CD14-positive monocyte (primary cell): ENCODE measurements at regions of chr12 and their contacts with region 1.

Region 1: GRCh38 chr12:52032804-52033502 is 18.3 kb upstream of the NR4A1 start:
- DNase-seq: peak; percentile 92 to 97 (median 97)
- H3K4me3 ChIP-seq: peak overlapping the region; percentile 15 to 66 (median 31)
- H3K4me3 Mint-ChIP-seq: peak overlapping the region; percentile 70 to 80
- H3K27ac ChIP-seq: peak overlapping the region; percentile 47 to 84
- H3K27ac Mint-ChIP-seq: peak overlapping the region; percentile 87 to 96 (median 95)
- H3K4me1 ChIP-seq: peaks cover 31 to 40% of the 10 kb centered on the region in 2 donors
- H3K4me1 Mint-ChIP-seq: peaks cover 38% of the 10 kb centered on the region
- H3K27me3 ChIP-seq: peaks cover 8 to 28% of the 10 kb centered on the region in 2 donors
- H3K27me3 Mint-ChIP-seq: peaks cover 21 to 36% (median 22%) of the 10 kb centered on the region in 3 donors
- CTCF ChIP-seq: no peak

Region 2: GRCh38 chr12:51994959-51995358 is 38.0 kb before region 1 on chr12:
- intact Hi-C with region 1: loop called in 1 of 2 experiments (anchors 5 kb)
- DNase-seq: no peak
- H3K4me3 ChIP-seq: no peak overlapping the region
- H3K4me3 Mint-ChIP-seq: no peak overlapping the region
- H3K27ac ChIP-seq: no peak overlapping the region
- H3K27ac Mint-ChIP-seq: peak overlapping the region in 1 of 7 donors; percentile 38
- H3K4me1 ChIP-seq: peaks cover 11% of the 10 kb centered on the region in 2 donors
- H3K4me1 Mint-ChIP-seq: peaks cover 17% of the 10 kb centered on the region
- H3K27me3 ChIP-seq: no peaks in the 10 kb centered on the region
- H3K27me3 Mint-ChIP-seq: peaks cover 0 to 5% (median 2%) of the 10 kb centered on the region in 3 donors
- CTCF ChIP-seq: no peak

Region 3: GRCh38 chr12:52050761-52051541 is 18.0 kb after region 1 on chr12 and contains the start of gene NR4A1:
- intact Hi-C with region 1: loop called (anchors 2 kb)
- DNase-seq: peak; percentile 92 to 99 (median 97)
- H3K4me3 ChIP-seq: peak within 1 kb of the TSS; percentile 60 to 87 (median 63)
- H3K4me3 Mint-ChIP-seq: peak within 1 kb of the TSS; percentile 94 to 99
- H3K27ac ChIP-seq: peak within 1 kb of the TSS; percentile 85 to 94
- H3K27ac Mint-ChIP-seq: peak within 1 kb of the TSS; percentile 94 to 97 (median 96)
- H3K4me1 ChIP-seq: peaks cover 36 to 72% of the 10 kb centered on the region in 2 donors
- H3K4me1 Mint-ChIP-seq: peaks cover 43% of the 10 kb centered on the region
- H3K27me3 ChIP-seq: peaks cover 0 to 24% of the 10 kb centered on the region in 2 donors
- H3K27me3 Mint-ChIP-seq: peaks cover 28 to 43% (median 39%) of the 10 kb centered on the region in 3 donors
- CTCF ChIP-seq: no peak
- polyA plus RNA-seq, gene NR4A1: 10.1 to 1,297 (median 41.4) TPM

Region 4: DNA sequence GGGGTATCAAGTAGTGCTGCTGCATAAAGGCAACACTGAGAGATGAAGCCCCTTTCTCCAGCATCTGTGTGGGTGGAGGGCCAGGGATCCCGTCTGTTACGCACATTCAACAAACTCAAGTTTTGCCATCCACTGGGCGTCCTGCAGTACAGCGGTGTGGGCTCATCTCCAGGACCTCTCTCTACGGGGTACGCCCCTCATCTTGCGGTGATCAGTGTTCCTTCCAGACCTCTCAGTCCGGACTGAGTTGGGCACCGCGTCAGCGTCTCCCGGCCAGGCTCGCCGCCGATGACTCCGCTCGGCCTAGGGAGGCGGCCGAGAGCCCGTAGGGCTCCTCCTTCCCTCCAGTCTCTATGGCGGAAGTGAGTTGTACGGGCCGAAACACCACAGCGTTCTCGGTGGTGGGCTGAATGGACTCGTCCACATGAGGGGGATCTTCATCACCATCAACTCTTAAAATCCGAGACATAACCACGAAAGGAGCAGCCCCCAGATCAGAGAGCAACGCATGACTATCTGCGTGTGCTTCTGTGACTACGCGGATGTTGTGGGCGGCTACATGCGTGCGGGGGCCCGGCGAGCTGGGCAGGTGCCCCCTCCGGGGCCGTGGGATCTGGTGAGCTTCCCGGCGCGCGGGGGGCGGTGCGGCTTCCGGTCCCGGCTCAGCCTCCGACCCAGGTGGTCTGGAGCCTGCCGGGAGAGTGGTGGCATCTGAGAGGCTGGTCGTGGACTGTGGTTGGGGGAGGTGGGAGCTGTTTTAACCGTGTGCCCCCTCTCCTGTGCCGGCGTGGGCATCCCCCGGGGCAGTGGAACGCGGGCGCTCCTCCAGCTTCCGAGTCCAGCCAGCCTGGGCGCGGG is 36.6 kb after region 1 on chr12 and contains the start of gene ATG101:
- intact Hi-C with region 1: loop called in 1 of 2 experiments (anchors 5 kb)
- DNase-seq: peak; percentile 93 to 94 (median 93)
- H3K4me3 ChIP-seq: peak within 1 kb of the TSS; percentile 63 to 93 (median 89)
- H3K4me3 Mint-ChIP-seq: peak within 1 kb of the TSS; percentile 95 to 96
- H3K27ac ChIP-seq: peak within 1 kb of the TSS; percentile 52 to 92
- H3K27ac Mint-ChIP-seq: peak within 1 kb of the TSS; percentile 92 to 100 (median 99)
- H3K4me1 ChIP-seq: peaks cover 20 to 21% of the 10 kb centered on the region in 2 donors
- H3K4me1 Mint-ChIP-seq: peaks cover 50% of the 10 kb centered on the region
- H3K27me3 ChIP-seq: peaks cover 0 to 5% of the 10 kb centered on the region in 2 donors
- H3K27me3 Mint-ChIP-seq: peaks cover 2 to 20% (median 20%) of the 10 kb centered on the region in 3 donors
- CTCF ChIP-seq: peak; percentile 65
- polyA plus RNA-seq, gene ATG101: 20.5 to 120 (median 26.4) TPM

Region 5: DNA sequence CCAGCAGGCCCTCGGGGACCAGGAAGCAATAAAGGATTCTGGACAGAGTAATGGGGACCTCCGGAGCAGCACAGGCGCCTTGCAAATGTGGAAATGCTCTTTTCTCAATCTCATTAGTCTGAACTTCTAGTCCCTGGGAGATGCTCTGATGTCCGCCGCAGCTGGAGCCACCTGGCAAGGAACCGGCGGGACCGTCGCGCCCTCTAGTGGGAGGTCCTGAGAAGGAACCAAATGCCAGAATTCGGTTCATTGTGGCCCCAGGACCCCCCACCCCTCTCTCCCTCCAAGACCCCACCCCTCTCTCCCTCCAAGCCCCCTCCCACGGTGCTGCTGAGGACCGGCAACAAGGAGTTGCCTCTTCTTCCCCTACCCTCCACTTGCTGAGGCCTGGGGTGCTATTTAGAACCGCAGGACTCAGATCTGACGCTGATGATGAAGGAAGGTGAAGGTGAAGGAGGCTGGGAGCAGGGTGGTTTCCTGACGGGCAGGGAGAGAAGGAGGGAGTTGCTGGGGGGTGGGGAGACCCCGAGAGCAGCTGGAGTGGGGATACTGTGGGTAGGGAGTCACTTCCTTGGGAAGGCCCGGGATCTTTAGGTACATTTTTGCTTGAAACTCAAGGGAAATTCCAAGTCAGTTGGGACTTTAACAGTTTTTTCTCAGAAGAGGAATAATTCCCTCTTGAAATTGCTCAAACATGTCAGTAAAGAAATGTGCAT is 89.0 kb after region 1 on chr12:
- intact Hi-C with region 1: loop called in 1 of 2 experiments (anchors 5 kb)
- DNase-seq: peak; percentile 38 to 61 (median 57)
- H3K4me3 ChIP-seq: no peak overlapping the region
- H3K4me3 Mint-ChIP-seq: peak overlapping the region in 1 of 2 donors; percentile 63
- H3K27ac ChIP-seq: no peak overlapping the region
- H3K27ac Mint-ChIP-seq: peak overlapping the region in 4 of 7 donors; percentile 42 to 79 (median 70)
- H3K4me1 ChIP-seq: peaks cover 28 to 41% of the 10 kb centered on the region in 2 donors
- H3K4me1 Mint-ChIP-seq: peaks cover 48% of the 10 kb centered on the region
- H3K27me3 ChIP-seq: peaks cover 0 to 8% of the 10 kb centered on the region in 2 donors
- H3K27me3 Mint-ChIP-seq: peaks cover 23 to 38% (median 25%) of the 10 kb centered on the region in 3 donors
- CTCF ChIP-seq: peak; percentile 90

Region 6: DNA sequence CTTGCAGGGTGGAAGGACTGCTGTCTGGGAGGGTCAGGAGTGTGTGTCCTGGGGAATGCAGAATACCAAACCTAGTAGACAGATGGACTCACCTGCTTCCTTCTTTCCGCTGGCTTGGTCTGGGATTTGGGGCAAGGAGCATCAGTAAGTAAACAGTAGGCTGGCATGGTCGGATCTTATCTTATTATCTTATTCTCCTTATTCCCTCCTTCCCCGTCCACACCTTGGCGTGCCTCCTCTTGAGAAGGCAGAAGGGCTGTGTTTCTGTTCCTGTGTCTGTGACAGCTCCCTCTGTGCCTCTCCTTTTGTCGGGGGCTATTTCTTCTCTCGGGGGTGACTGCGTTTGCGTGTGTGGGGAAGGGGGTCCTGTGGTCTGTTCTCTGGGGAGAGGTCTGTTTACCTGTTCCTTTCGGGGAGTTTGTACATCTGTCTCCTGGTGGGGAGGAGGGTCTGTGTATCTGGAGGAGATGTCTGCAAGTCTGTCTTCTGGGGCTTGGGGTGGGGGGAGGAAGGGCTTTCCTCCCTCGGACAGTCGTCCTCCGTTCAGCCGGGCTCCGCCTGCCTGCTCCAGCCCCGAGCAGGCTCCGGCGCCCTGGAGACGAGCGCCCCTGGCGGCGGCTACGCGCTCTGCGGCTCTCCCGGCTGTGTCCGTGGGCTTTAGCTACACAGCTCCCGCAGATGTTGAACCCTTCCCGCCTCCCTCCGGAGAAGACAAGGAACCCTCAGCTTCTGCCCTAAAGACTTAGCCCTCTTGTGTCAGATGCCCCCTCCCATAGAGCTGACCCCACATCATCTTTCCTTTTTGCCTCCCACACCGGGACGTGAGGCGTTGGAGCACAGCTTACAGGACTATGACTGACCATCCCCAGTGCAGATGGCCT is 245.8 kb after region 1 on chr12:
- intact Hi-C with region 1: no loop called
- DNase-seq: peak; percentile 66 to 73 (median 71)
- H3K4me3 ChIP-seq: no peak overlapping the region
- H3K4me3 Mint-ChIP-seq: peak overlapping the region in 1 of 2 donors; percentile 76
- H3K27ac ChIP-seq: no peak overlapping the region
- H3K27ac Mint-ChIP-seq: peak overlapping the region in 5 of 7 donors; percentile 60 to 94 (median 81)
- H3K4me1 ChIP-seq: peaks cover 29 to 33% of the 10 kb centered on the region in 2 donors
- H3K4me1 Mint-ChIP-seq: peaks cover 37% of the 10 kb centered on the region
- H3K27me3 ChIP-seq: peaks cover 2 to 41% of the 10 kb centered on the region in 2 donors
- H3K27me3 Mint-ChIP-seq: peaks cover 19 to 44% (median 21%) of the 10 kb centered on the region in 3 donors
- CTCF ChIP-seq: peak; percentile 97